Heart left ventricle (tissue), 16 donors: ENCODE measurements at regions of chr15 and their contacts with region 1.

Region 1: DNA sequence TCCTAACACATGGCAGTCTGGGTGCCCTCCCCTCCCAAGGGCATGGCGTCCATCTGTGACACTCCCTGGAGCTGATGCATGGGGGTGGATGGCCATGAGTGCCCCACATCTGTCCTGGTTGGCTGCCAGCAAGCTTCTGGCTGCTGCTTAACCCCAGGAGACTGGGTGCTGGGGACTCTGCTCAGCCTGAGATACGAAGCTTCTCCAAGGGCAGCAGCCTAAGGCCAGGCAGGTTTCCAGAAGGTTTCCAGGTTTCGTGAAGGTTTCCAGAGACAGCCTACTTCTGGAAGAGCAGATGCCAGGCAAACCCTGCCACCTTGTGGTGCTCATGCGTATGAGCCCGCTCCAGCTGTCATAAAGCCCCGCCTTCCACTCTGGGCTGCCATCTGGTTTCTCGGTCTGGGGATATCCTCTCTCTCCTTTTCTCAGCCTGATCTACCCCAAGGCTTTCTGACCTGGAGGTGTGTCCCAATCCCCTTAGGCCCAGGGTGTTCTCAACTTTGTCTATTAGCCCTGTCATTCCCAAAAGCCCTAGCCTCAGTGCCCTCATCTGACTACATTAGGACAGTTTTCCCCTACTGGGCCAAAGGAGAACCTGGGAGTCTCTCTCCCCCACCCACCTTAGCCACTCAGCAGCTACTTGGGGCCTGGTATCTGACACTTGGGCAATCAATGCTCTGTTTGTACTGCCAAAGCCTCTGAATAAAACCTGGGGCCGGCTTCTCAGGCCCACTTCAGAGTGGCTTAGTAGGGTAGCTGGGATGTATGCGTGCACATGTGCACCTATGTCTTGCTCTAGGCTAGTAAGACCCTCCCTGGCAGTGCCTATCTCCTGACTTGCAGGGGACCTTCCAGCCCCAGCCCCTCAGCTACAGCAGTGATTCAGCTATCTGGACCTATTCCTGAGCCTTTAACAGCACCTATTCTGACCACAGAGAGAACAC is 12.0 kb downstream of the MRPL46 start:
- DNase-seq: peak in 4 of 5 donors; percentile 32 to 65 (median 42)
- ATAC-seq: peak; percentile 26 to 83 (median 80)
- H3K4me3 ChIP-seq: no peak overlapping the region
- H3K27ac ChIP-seq: peak overlapping the region in 3 of 12 donors; percentile 1 to 23 (median 2)
- H3K4me1 ChIP-seq: peaks cover 0 to 16% (median 7%) of the 10 kb centered on the region in 12 donors
- H3K27me3 ChIP-seq: no peaks in the 10 kb centered on the region
- CTCF ChIP-seq: peak; percentile 44 to 74 (median 56)
- POLR2A ChIP-seq: no peak

Region 2: GRCh38 chr15:87710406-87710805 is 744.7 kb before region 1 on chr15:
- intact Hi-C with region 1: no loop called
- DNase-seq: peak in 2 of 5 donors; percentile 12 to 30
- ATAC-seq: peak in 3 of 4 donors; percentile 60 to 76 (median 61)
- H3K4me3 ChIP-seq: no peak overlapping the region
- H3K27ac ChIP-seq: peak overlapping the region in 4 of 12 donors; percentile 53 to 76 (median 58)
- H3K4me1 ChIP-seq: peaks cover 0 to 20% (median 0%) of the 10 kb centered on the region in 12 donors
- H3K27me3 ChIP-seq: no peaks in the 10 kb centered on the region
- CTCF ChIP-seq: no peak
- POLR2A ChIP-seq: no peak

Region 3: DNA sequence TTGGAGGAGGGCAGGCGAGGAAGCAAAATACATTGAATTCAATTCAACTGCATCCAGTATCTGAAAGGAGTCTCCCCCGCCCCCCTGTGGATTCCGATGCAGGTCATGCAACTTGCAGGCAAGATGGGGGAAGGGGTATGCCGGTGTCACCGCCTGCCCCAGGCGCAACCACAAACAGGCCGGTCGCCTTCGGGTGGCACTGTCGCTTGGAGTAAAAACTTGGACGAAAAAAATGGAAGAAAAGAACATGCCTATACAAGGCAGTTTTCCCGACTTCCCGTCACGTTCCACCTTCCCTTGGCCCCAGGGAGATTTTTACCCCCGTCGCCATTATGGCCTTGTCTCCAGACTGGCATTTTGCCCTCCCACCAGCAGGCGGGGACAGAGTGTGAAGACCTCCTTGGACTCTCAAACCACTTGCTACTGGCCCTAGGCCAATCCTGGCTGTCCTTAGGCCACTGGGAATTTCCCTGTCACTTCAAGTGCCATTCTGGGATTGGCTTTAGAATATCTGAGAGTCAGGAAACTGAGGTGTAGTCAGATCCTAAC is 197.0 kb before region 1 on chr15:
- intact Hi-C with region 1: loop called in 1 of 10 experiments (anchors 5 kb)
- DNase-seq: peak in 2 of 5 donors; percentile 52 to 66
- ATAC-seq: peak in 3 of 4 donors; percentile 29 to 43 (median 37)
- H3K4me3 ChIP-seq: peak overlapping the region in 11 of 12 donors; percentile 39 to 63 (median 51)
- H3K27ac ChIP-seq: peak overlapping the region in 1 of 12 donors; percentile 50
- H3K4me1 ChIP-seq: peaks cover 0 to 35% (median 13%) of the 10 kb centered on the region in 12 donors
- H3K27me3 ChIP-seq: peaks cover 2 to 59% (median 35%) of the 10 kb centered on the region in 9 donors
- CTCF ChIP-seq: peak in 8 of 12 donors; percentile 6 to 46 (median 32)
- POLR2A ChIP-seq: no peak

Region 4: GRCh38 chr15:88288664-88289063 is 166.5 kb before region 1 on chr15:
- intact Hi-C with region 1: no loop called
- DNase-seq: no peak
- ATAC-seq: no peak
- H3K4me3 ChIP-seq: no peak overlapping the region
- H3K27ac ChIP-seq: no peak overlapping the region
- H3K4me1 ChIP-seq: no peaks in the 10 kb centered on the region
- H3K27me3 ChIP-seq: peaks cover 0 to 36% (median 12%) of the 10 kb centered on the region in 9 donors
- CTCF ChIP-seq: no peak
- POLR2A ChIP-seq: no peak

Region 5: GRCh38 chr15:88635318-88635717 is 180.2 kb after region 1 on chr15:
- intact Hi-C with region 1: no loop called
- DNase-seq: no peak
- ATAC-seq: no peak
- H3K4me3 ChIP-seq: peak overlapping the region in 1 of 12 donors; percentile 18
- H3K27ac ChIP-seq: peak overlapping the region in 2 of 12 donors; percentile 19 to 96
- H3K4me1 ChIP-seq: peaks cover 0 to 58% (median 18%) of the 10 kb centered on the region in 12 donors
- H3K27me3 ChIP-seq: no peaks in the 10 kb centered on the region
- CTCF ChIP-seq: no peak
- POLR2A ChIP-seq: no peak

Region 6: GRCh38 chr15:88834211-88834812 is 379.2 kb after region 1 on chr15:
- intact Hi-C with region 1: no loop called
- DNase-seq: peak in 3 of 5 donors; percentile 23 to 56 (median 26)
- ATAC-seq: peak in 3 of 4 donors; percentile 44 to 75 (median 75)
- H3K4me3 ChIP-seq: no peak overlapping the region
- H3K27ac ChIP-seq: peak overlapping the region in 1 of 12 donors; percentile 34
- H3K4me1 ChIP-seq: peaks cover 0 to 8% (median 0%) of the 10 kb centered on the region in 12 donors
- H3K27me3 ChIP-seq: peaks cover 0 to 3% (median 0%) of the 10 kb centered on the region in 9 donors
- CTCF ChIP-seq: peak; percentile 39 to 76 (median 61)
- POLR2A ChIP-seq: no peak